ENCODE measurements at regions of chr10 and their contacts with region 1.

Region 1: DNA sequence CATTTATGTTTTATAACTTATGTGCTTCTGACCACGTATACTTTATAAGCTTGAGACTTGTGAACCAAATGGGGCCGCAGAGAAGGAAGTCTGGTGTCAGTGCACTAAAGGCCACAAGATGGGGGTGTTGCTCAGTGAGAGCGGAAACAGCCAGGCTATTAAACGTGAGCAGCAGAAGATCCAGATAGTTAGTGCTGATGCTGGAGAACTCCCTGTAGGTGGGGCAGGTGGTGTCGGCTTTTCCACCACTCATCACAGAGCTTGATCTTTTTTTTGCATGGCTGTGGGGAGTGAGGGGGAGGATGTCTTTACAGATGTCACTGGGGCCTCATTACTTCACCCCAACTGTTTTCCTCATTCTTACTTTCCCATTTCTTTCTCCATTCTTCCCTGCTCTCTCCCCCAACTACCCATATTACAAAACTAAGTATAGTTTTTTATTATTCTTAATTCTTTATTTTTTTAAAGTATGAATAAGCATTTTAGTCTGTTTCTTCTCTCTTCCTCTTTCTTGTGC is 34.7 kb downstream of the ACADSB start:
- DNase-seq: peak; percentile 62 to 72 (median 69)
- ATAC-seq: peak; percentile 98
- H3K4me3 ChIP-seq: no peak overlapping the region
- H3K27ac ChIP-seq: no peak overlapping the region
- H3K4me1 ChIP-seq: no peaks in the 10 kb centered on the region
- H3K27me3 ChIP-seq: no peaks in the 10 kb centered on the region
- CTCF ChIP-seq: peak; percentile 77 to 80 (median 77)
- EP300 ChIP-seq: no peak
- POLR2A ChIP-seq: no peak
- RAD21 ChIP-seq: peak; percentile 83 to 86

Region 2: DNA sequence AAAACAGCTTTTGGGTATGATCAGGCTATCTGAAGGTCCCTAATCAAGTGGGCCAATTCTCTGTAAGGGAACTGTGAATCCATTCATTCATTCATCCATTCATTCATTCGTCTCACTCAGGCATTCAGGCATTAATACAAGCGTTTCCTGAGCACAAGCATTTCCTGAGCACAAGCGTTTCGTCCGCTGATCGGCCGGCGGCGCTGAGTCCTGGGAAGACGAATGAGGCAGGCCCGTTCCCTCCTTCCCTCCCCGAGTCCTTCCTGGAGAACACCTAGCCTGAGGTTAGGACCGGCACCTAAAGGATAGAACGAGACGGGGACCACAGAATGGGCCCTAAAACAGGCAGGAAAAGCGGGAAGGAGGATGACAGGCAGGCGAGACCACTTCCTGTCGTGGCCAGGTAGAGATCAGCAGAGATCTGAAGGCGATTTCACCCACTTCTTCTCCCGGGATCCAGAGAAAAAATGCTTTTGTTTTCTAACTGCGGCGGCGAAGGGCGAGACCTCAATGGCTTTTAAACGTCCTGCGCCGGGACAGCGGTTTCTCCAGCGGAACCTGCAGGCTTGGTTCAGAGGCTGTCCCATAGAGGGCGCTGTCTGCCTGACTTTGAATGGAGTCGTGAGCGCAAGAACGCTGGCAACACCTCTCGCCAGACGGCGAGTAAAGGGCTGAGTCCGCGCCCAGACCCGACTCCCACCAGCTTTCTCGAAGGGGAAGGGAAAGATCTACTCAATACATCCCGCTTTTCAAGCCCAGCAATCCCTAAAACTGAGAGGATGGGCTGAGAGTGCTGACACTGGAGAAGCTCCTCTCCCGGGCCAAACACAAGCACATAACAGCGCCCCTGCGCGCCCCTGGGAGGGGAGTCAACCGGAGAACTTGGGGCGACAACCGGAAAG is 89.4 kb after region 1 on chr10:
- CTCF ChIA-PET with region 1: no interaction called
- POLR2A ChIA-PET with region 1: interaction called, 3 read pairs
- in situ Hi-C with region 1: no loop called
- intact Hi-C with region 1: loop called (anchors 2 kb)
- DNase-seq: peak; percentile 66 to 89 (median 72)
- ATAC-seq: peak; percentile 41
- H3K4me3 ChIP-seq: no peak overlapping the region
- H3K27ac ChIP-seq: no peak overlapping the region
- H3K4me1 ChIP-seq: peaks cover 8 to 47% of the 10 kb centered on the region in 2 experiments
- H3K27me3 ChIP-seq: 0 out of 5 replicates have a peak, but pooled peaks cover 0 to 10% of the 10 kb centered on the region in 2 experiments
- CTCF ChIP-seq: peak; percentile 83 to 87 (median 85)
- EP300 ChIP-seq: no peak
- POLR2A ChIP-seq: no peak
- RAD21 ChIP-seq: peak; percentile 63 to 81

Region 3: DNA sequence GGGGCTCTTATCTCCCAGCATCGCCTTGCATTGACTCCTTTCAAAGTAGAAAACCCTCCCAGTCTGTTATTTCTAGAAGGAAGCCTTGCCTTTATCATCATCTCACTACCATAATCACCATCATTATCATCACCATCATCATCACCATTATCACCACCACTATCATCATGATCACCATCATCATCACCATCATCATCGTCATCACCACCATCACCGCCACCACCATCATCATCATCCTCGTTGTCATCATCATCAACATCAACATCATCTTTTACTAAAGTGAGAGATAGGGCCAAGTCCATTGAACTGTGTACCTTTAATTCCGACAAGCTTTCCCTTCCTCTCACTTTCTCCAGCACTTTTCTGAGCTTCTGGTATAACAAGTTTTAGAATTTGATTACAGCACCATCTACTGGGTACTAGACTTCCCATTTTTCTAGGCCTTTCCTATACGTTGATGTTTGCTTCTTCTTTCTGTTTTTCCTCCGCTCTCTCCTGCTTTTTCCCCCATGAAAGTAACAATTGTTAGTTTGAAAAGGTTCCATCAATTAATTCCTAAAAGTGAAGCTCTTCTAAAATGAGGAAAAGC is 337.1 kb after region 1 on chr10:
- CTCF ChIA-PET with region 1: interaction called, 6 read pairs
- POLR2A ChIA-PET with region 1: no interaction called
- in situ Hi-C with region 1: loop called (anchors 10 kb)
- intact Hi-C with region 1: no loop called
- DNase-seq: peak in 1 of 4 experiments; percentile 2
- ATAC-seq: no peak
- H3K4me3 ChIP-seq: no peak overlapping the region
- H3K27ac ChIP-seq: no peak overlapping the region
- H3K4me1 ChIP-seq: no peaks in the 10 kb centered on the region
- H3K27me3 ChIP-seq: peaks cover 0 to 3% of the 10 kb centered on the region in 2 experiments; a peak in 1 of 5 replicates
- CTCF ChIP-seq: peak in 2 of 3 experiments; percentile 9 to 49; a peak in 3 of 6 replicates
- EP300 ChIP-seq: no peak
- POLR2A ChIP-seq: no peak
- RAD21 ChIP-seq: peak; percentile 50 to 66

Region 4: DNA sequence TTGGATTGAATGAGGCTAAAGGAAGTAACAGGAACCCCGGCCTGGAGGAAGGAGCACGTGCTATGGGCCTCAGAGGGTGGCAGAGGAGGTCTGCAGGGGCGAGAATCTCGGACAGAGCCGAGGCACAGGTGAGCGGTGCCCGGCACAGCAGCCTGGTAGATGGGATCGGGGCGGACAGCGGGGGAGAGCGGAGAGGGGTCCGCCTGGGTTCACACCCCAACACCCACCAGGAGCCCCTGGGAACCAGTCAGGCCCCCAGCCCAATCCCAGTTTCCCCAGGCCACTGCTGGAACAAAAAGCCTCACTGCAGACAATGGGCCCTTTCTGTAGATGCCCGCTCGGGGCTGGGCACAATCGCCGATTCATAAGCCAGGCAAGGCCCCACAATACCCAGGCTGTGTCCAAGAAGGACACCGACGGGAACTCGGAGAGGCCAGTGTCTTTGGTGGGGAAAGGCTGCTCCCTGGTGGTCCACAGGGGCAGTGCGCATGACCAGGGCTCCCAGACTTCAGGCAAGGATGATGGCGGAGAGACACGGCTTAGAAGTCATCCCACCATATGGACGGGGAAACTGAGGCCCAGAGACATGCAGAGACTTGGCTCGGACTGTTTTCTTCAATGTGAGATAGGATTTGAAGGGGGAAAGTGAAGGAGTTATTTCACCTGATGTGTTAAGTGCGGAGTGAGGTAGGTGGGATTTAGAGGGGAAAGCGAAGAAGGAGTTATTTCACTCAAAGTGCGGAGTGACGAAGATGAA is 515.8 kb after region 1 on chr10:
- CTCF ChIA-PET with region 1: interaction called, 28 read pairs
- POLR2A ChIA-PET with region 1: no interaction called
- in situ Hi-C with region 1: loop called (anchors 5 kb)
- intact Hi-C with region 1: loop called (anchors 1 kb)
- DNase-seq: peak; percentile 62 to 77 (median 74)
- ATAC-seq: peak; percentile 96
- H3K4me3 ChIP-seq: no peak overlapping the region
- H3K27ac ChIP-seq: no peak overlapping the region
- H3K4me1 ChIP-seq: peaks cover 0 to 8% of the 10 kb centered on the region in 2 experiments; a peak in 2 of 5 replicates
- H3K27me3 ChIP-seq: peaks cover 0 to 15% of the 10 kb centered on the region in 2 experiments; a peak in 2 of 5 replicates
- CTCF ChIP-seq: peak; percentile 72 to 82 (median 74)
- EP300 ChIP-seq: no peak
- POLR2A ChIP-seq: no peak
- RAD21 ChIP-seq: peak; percentile 82 to 86

Measured in K562 (cell line).